Calu3 (cell line): ENCODE measurements at regions of chr5 and their contacts with region 1.

Region 1: DNA sequence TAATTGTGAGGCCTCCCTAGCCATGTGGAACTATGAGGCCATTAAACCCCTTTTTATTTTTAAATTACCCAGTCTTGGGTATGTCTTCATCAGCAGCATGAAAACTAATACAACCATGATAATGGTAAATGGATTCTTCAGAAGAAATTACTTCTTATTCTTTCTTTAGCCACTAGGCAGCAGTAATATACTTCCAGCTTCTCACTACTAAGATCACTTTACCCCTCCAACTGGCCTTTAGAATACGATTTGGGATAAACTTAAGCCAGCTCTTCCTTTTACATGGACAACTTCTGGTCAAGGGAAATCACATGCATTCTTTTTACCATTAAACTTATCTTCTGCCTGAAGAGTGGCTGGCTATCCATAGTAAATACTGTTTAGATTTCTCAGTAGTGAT is 355.4 kb downstream of the MAN2A1 start:
- DNase-seq: no peak
- H3K4me3 Mint-ChIP-seq: no peak overlapping the region
- H3K27ac Mint-ChIP-seq: no peak overlapping the region
- H3K4me1 Mint-ChIP-seq: no peaks in the 10 kb centered on the region
- H3K27me3 Mint-ChIP-seq: peaks cover 46% of the 10 kb centered on the region
- CTCF ChIP-seq: no peak

Region 2: DNA sequence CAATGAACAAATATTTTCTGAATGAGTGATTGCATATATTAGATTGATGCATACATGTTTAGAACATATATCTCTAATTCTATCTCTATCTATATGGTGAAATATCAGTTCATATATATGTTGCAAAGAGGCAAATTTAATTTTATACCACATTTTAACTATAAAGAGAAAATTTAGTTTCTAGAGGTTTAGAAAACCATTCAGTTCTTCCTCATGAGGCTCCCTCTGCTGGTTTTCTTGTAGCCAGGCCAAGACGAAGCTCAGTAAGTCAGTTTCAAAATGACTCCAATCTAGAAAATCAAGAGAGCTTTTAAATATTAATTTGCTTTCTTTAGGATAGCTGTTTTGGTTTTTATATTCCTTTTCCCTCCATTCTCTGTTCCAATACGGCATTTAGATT is 369.2 kb after region 1 on chr5:
- CTCF ChIA-PET with region 1: no interaction called
- intact Hi-C with region 1: loop called (anchors 1 kb)
- DNase-seq: peak; percentile 6
- H3K4me3 Mint-ChIP-seq: no peak overlapping the region
- H3K27ac Mint-ChIP-seq: no peak overlapping the region
- H3K4me1 Mint-ChIP-seq: no peaks in the 10 kb centered on the region
- H3K27me3 Mint-ChIP-seq: no peaks in the 10 kb centered on the region
- CTCF ChIP-seq: no peak

Region 3: DNA sequence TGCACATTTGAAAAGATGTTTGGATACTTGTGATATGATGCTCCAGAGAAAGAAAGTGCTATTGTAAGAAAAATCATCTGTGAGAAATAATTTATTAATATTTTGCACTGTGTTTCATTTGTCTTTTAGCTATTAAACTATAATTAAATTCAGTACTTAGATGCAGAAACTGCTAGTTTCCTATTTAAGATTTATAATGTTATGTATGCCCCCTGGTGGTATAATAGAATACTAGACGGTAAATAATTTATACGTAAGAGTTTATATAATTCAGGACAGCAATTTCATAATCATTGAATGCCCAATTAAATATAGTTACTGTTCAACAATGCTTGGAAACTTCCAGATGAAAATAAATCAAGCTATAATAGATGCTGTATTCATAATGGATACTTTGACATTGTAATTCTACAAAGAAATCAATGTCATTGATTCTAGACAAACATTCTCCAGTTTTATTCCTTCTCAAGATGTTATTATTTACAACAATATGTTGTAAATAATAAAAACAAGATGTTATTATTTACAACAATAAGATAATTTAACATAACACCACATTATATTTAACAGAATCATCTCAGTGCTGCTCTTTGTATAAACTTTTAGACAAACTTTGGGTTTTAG is 580.3 kb after region 1 on chr5:
- CTCF ChIA-PET with region 1: no interaction called
- intact Hi-C with region 1: loop called (anchors 10 kb)
- DNase-seq: no peak
- H3K4me3 Mint-ChIP-seq: no peak overlapping the region
- H3K27ac Mint-ChIP-seq: no peak overlapping the region
- H3K4me1 Mint-ChIP-seq: no peaks in the 10 kb centered on the region
- H3K27me3 Mint-ChIP-seq: no peaks in the 10 kb centered on the region
- CTCF ChIP-seq: no peak